ENCODE measurements at regions of chr14 and their contacts with region 1.

Region 1: GRCh38 chr14:35365130-35366055 is 39.2 kb downstream of the NFKBIA start:
- DNase-seq: peak; percentile 95
- ATAC-seq: peak; percentile 89
- H3K4me3 Mint-ChIP-seq: peak overlapping the region; percentile 49
- H3K27ac Mint-ChIP-seq: peak overlapping the region; percentile 94
- H3K4me1 Mint-ChIP-seq: peaks cover 68% of the 10 kb centered on the region
- H3K27me3 Mint-ChIP-seq: no peaks in the 10 kb centered on the region
- CTCF ChIP-seq: no peak

Region 2: GRCh38 chr14:35292051-35292769 is 73.2 kb before region 1 on chr14 and contains the start of gene PSMA6:
- CTCF ChIA-PET with region 1: interaction called, 5 read pairs
- POLR2A ChIA-PET with region 1: interaction called, 13 read pairs
- intact Hi-C with region 1: no loop called
- DNase-seq: peak; percentile 99
- ATAC-seq: peak; percentile 92
- H3K4me3 Mint-ChIP-seq: peak within 1 kb of the TSS; percentile 97
- H3K27ac Mint-ChIP-seq: peak within 1 kb of the TSS; percentile 98
- H3K4me1 Mint-ChIP-seq: peaks cover 50% of the 10 kb centered on the region
- H3K27me3 Mint-ChIP-seq: no peaks in the 10 kb centered on the region
- CTCF ChIP-seq: no peak
- total RNA-seq, gene PSMA6: 361 to 393 TPM

Region 3: DNA sequence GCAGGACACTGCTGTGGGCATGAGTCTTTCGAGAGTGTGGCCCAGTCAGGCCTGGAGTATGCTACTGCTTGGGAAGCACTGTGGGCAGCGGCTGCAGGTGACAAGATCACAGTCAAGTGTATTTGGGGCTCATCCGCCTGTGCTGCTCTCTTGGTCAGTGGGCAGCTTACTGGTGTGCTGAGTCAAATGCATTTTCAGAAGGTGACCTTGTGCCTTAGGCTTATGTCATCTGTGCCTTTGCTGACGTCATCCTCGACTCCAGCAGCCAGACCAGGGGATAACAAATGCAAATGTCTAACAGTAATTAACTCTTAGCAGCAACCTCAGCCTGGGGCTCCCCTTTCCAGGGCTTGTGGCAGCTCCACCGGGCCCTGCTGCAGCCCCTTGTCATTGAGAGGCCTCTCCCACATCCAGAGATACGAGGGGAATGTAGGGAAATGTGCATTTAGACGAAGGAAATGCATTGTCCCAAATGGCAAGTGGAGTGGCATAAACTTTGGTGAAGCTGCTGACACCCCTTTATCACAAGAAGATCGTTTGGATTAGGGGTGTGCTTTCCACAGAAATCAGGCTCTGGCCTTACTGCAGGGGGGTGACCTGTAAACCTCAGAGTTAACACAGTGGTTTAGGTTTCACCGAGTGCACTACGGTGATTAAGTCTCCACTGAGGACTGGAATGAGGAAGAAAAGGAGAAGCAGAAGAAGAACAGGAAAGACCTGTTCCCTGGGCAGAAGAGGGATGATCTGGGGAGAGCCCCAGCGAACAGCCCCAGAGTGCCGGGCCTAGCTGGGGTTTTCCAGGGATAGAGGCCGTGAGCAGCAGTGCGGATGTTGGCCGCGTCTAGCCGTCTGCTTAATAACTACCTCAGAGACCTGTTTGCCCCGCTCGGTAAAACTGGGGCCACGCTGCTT is 33.5 kb before region 1 on chr14:
- CTCF ChIA-PET with region 1: interaction called, 9 read pairs
- POLR2A ChIA-PET with region 1: interaction called, 17 read pairs
- intact Hi-C with region 1: no loop called
- DNase-seq: no peak
- ATAC-seq: no peak
- H3K4me3 Mint-ChIP-seq: no peak overlapping the region
- H3K27ac Mint-ChIP-seq: peak overlapping the region; percentile 95
- H3K4me1 Mint-ChIP-seq: peaks cover 30% of the 10 kb centered on the region
- H3K27me3 Mint-ChIP-seq: no peaks in the 10 kb centered on the region
- CTCF ChIP-seq: no peak

Region 4: GRCh38 chr14:35425850-35426249 is 60.5 kb after region 1 on chr14:
- CTCF ChIA-PET with region 1: no interaction called
- POLR2A ChIA-PET with region 1: no interaction called
- intact Hi-C with region 1: no loop called
- DNase-seq: no peak
- ATAC-seq: no peak
- H3K4me3 Mint-ChIP-seq: no peak overlapping the region
- H3K27ac Mint-ChIP-seq: no peak overlapping the region
- H3K4me1 Mint-ChIP-seq: peaks cover 26% of the 10 kb centered on the region
- H3K27me3 Mint-ChIP-seq: no peaks in the 10 kb centered on the region
- CTCF ChIP-seq: no peak

Measured in activated CD8-positive, alpha-beta T cell treated with anti-CD3 and anti-CD28 coated beads for 36 hours (primary cell).